Heart right ventricle (tissue), 16 donors: ENCODE measurements at regions of chr20 and their contacts with region 1.

Region 1: DNA sequence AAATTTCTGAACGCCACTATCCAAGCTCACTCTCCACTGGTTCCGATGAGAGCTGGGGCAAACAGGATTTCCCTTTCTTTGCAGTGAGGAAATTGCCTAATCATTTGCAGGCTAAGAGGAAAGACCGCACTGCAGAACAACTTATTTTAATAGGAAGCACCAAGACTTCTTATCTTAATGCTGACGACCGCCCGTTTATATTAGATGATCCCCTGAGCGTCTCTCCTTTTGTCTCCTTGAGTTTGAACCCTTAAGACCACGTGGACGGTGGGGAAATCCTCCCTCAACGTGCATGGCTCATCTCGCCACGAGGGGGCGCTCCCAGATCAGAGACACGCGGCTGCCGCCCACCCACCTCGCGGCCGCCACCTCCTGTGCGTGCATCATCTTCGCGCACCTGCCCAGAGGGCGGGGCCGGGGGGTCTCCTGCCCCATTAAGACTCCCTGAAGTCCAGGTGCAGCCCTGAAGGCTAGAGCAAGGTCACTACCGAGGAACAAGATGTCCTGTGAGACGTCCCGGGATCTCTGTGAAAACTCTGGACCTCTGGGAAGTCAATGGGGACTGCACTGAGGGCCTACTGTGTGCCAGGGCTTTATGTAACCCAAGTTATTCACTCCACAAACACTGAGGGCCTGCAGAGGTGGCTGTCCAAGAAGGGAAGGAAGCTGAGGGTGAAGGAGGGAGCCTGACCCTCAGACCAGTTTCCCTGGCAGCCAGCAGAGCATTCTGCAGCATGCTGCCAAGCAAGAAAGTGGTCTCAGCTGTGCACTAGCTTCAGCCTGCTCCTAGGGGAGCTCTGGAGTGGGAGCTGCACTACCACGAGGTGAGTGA is 28.1 kb downstream of the PDYN start:
- DNase-seq: peak; percentile 71 to 75
- ATAC-seq: peak; percentile 72 to 90 (median 80)
- H3K4me3 ChIP-seq: peak overlapping the region in 4 of 10 donors; percentile 5 to 22 (median 13)
- H3K27ac ChIP-seq: peak overlapping the region in 2 of 10 donors; percentile 16 to 69
- H3K4me1 ChIP-seq: peaks cover 0 to 26% (median 10%) of the 10 kb centered on the region in 9 donors
- H3K27me3 ChIP-seq: peaks cover 0 to 28% (median 6%) of the 10 kb centered on the region in 7 donors
- CTCF ChIP-seq: peak; percentile 81 to 97 (median 94)

Region 2: DNA sequence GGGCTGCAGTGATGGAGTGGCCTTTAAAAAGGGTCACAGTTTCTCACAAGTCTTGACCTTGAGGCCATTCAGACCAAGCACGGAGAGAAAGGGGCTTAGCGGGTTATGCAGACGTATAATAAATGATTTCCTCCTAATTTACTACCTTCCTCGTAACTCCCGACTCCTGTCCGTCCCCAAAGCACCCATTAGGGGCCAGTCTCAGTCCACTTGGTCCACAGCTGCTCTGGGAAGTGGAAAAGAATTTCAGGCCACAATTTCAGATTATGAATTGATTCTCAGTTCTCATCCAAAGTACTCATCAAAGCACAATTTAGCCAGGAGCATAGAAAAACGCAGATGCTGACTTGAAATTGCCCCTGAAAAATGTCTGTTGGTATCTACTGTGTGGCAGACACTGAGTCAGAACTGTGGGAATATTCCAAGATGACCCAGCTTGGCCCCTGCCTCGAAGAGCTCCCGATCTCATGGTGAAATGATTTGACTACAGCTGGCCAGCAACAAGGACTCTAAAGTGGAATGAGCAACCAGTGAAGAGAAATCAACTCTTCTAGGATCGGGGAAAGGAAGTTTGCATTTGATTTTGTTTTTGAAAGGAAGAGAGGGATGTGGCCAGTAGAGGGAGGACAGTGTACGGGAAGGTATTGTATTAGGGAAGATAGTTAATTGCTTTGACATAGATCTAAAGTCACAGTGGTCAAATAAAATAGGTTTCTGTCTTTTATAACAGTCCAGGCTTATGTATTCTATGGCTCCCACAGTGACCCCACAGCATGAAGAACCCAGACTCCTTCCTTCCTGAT is 120.6 kb after region 1 on chr20:
- intact Hi-C with region 1: loop called in 4 of 10 experiments (anchors 5 to 10 kb)
- DNase-seq: no peak
- ATAC-seq: peak in 5 of 8 donors; percentile 51 to 70 (median 62)
- H3K4me3 ChIP-seq: no peak overlapping the region
- H3K27ac ChIP-seq: no peak overlapping the region
- H3K4me1 ChIP-seq: no peaks in the 10 kb centered on the region
- H3K27me3 ChIP-seq: peaks cover 0 to 41% (median 17%) of the 10 kb centered on the region in 7 donors
- CTCF ChIP-seq: peak in 7 of 9 donors; percentile 20 to 47 (median 38)